ENCODE measurements at regions of chr4 and their contacts with region 1.

Region 1: GRCh38 chr4:154506253-154506652 is 14.7 kb upstream of the DCHS2 start:
- DNase-seq: peak; percentile 21

Region 2: DNA sequence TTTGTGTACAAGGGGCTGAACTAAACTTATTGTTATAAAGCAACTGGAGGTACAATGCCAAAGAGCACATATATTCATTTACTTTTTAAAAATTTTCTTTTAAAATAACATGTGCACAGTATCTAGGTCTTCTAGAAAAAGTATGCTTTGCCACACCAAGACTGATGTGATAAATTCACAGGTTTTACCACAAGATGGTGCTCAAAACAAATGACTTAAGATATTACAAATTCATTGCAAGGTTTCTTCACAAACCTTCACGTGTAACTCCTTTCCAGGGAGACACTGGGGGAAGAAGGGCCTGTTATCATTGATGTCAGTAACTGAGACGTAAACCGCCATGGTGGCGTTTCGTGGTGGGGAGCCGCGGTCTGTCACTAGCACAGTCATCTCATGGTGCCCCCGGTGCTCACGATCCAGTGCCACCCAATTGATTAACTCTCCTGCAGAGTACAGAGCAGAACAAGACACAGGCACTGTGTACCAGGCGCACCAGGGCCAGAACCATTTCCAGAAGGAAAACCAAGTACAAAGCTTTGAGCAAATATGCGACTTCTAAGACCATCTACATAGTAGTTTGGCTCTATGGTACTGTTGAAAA is 176.9 kb before region 1 on chr4:
- CTCF ChIA-PET with region 1: interaction called, 20 read pairs
- POLR2A ChIA-PET with region 1: no interaction called
- DNase-seq: peak; percentile 24

Measured in HEK293T (cell line).